Activated CD4-positive, alpha-beta memory T cell treated with anti-CD3 and anti-CD28 coated beads for 36 hours (primary cell): ENCODE measurements at regions of chr11 and their contacts with region 1.

Region 1: GRCh38 chr11:8566613-8567210 is 27.3 kb downstream of the STK33 start:
- DNase-seq: no peak
- H3K4me3 Mint-ChIP-seq: no peak overlapping the region
- H3K27ac Mint-ChIP-seq: no peak overlapping the region
- H3K4me1 Mint-ChIP-seq: no peaks in the 10 kb centered on the region
- H3K27me3 Mint-ChIP-seq: peaks cover 20% of the 10 kb centered on the region

Region 2: GRCh38 chr11:8192016-8192895 is 374.5 kb before region 1 on chr11:
- CTCF ChIA-PET with region 1: interaction called, 15 read pairs
- POLR2A ChIA-PET with region 1: no interaction called
- intact Hi-C with region 1: no loop called
- DNase-seq: peak; percentile 56
- H3K4me3 Mint-ChIP-seq: no peak overlapping the region
- H3K27ac Mint-ChIP-seq: no peak overlapping the region
- H3K4me1 Mint-ChIP-seq: no peaks in the 10 kb centered on the region
- H3K27me3 Mint-ChIP-seq: peaks cover 19% of the 10 kb centered on the region

Region 3: DNA sequence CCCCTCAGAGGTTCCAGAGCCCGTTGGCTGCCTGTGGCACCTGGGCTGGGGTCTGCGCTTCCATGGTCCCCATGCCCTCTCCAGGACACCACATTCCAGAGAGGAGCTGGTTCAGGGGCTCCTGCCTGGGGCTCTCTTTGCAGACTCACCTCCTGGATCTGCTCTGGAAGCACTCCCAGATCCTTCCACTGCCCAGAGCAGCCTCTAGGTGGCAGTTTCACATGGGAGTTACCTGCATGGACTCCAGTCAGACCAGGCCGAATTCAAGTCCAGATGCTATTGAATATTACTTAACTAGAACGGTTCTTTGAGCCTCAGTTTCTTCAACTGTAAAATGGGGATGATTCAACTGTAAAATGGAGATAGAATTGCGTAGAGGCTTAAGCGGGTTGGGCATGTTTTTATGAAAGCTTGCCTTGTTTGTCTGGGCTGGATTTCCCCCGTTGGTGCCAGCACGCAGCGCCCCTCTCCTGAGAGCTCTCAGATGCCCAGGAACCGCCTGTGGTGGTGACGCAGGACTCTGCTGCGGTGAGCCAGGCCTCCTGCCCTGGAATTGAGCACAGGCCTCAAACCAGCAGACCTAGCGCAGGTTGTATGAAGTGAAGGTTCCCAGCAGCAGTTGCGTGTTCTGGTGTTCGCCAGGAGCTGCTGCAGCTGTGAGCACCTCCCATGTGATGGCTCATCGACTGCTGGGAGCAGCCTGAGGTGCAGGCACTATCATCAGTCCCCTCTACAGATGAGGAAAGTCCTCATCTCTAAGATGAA is 347.3 kb before region 1 on chr11:
- CTCF ChIA-PET with region 1: interaction called, 15 read pairs
- POLR2A ChIA-PET with region 1: no interaction called
- intact Hi-C with region 1: no loop called
- DNase-seq: peak; percentile 33
- H3K4me3 Mint-ChIP-seq: no peak overlapping the region
- H3K27ac Mint-ChIP-seq: no peak overlapping the region
- H3K4me1 Mint-ChIP-seq: no peaks in the 10 kb centered on the region
- H3K27me3 Mint-ChIP-seq: no peaks in the 10 kb centered on the region

Region 4: DNA sequence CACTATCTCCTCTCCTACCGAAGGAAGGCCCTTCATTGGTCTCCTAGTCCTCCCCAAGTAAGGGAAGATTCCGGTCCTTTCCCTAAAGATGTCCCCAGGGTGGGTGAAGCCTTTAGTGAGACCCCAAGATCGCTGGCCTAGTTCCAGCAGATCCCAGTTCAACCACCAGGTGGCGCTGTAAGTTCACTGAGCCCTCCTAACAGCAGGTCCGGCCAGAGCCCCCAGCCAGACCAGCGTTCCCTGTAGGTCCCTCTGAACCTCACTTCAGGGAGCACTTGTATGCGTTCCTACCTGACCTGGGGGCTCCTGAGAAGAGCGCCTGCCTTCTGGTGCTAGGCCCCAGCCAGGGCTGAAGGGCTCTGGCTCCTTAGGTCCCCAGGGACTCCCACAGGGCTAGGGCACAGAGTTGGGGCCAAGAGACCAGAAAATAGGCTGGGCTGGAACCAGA is 341.1 kb before region 1 on chr11:
- CTCF ChIA-PET with region 1: interaction called, 15 read pairs
- POLR2A ChIA-PET with region 1: no interaction called
- intact Hi-C with region 1: loop called (anchors 1 kb)
- DNase-seq: peak; percentile 76
- H3K4me3 Mint-ChIP-seq: no peak overlapping the region
- H3K27ac Mint-ChIP-seq: no peak overlapping the region
- H3K4me1 Mint-ChIP-seq: no peaks in the 10 kb centered on the region
- H3K27me3 Mint-ChIP-seq: no peaks in the 10 kb centered on the region

Region 5: GRCh38 chr11:8247312-8247711 is 319.4 kb before region 1 on chr11:
- CTCF ChIA-PET with region 1: interaction called, 10 read pairs
- POLR2A ChIA-PET with region 1: no interaction called
- intact Hi-C with region 1: no loop called
- DNase-seq: peak; percentile 35
- H3K4me3 Mint-ChIP-seq: no peak overlapping the region
- H3K27ac Mint-ChIP-seq: no peak overlapping the region
- H3K4me1 Mint-ChIP-seq: no peaks in the 10 kb centered on the region
- H3K27me3 Mint-ChIP-seq: peaks cover 6% of the 10 kb centered on the region

Region 6: GRCh38 chr11:8328848-8329330 is 237.8 kb before region 1 on chr11:
- CTCF ChIA-PET with region 1: no interaction called
- POLR2A ChIA-PET with region 1: no interaction called
- intact Hi-C with region 1: loop called (anchors 2 kb)
- DNase-seq: peak; percentile 88
- H3K4me3 Mint-ChIP-seq: no peak overlapping the region
- H3K27ac Mint-ChIP-seq: no peak overlapping the region
- H3K4me1 Mint-ChIP-seq: no peaks in the 10 kb centered on the region
- H3K27me3 Mint-ChIP-seq: peaks cover 9% of the 10 kb centered on the region

Region 7: DNA sequence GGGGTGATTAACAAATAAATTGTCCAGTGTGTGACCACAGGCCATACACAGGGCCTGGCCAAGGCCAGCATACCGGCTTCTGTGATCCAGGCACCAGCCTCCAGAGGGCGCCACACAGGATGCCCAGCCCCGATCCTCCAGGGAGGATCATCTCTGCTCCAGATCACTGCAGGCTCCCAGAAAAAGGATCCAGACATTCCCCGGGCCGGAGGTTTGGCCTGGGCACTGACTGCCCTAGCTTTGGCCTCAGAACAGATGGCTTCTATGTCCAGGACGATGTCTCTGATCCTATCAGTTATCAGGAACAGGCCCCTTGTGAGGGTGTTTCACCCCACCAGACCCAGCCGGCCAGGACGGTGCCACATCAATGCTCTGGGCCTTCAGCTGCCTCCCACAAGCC is 228.6 kb before region 1 on chr11:
- CTCF ChIA-PET with region 1: interaction called, 3 read pairs
- POLR2A ChIA-PET with region 1: no interaction called
- intact Hi-C with region 1: loop called (anchors 1 kb)
- DNase-seq: peak; percentile 44
- H3K4me3 Mint-ChIP-seq: no peak overlapping the region
- H3K27ac Mint-ChIP-seq: no peak overlapping the region
- H3K4me1 Mint-ChIP-seq: peaks cover 3% of the 10 kb centered on the region
- H3K27me3 Mint-ChIP-seq: peaks cover 5% of the 10 kb centered on the region

Region 8: GRCh38 chr11:8527939-8528338 is 38.8 kb before region 1 on chr11:
- CTCF ChIA-PET with region 1: no interaction called
- POLR2A ChIA-PET with region 1: no interaction called
- intact Hi-C with region 1: no loop called
- DNase-seq: no peak
- H3K4me3 Mint-ChIP-seq: no peak overlapping the region
- H3K27ac Mint-ChIP-seq: no peak overlapping the region
- H3K4me1 Mint-ChIP-seq: no peaks in the 10 kb centered on the region
- H3K27me3 Mint-ChIP-seq: peaks cover 2% of the 10 kb centered on the region